IMR-90 (cell line): ENCODE measurements at regions of chr4 and their contacts with region 1.

Region 1: DNA sequence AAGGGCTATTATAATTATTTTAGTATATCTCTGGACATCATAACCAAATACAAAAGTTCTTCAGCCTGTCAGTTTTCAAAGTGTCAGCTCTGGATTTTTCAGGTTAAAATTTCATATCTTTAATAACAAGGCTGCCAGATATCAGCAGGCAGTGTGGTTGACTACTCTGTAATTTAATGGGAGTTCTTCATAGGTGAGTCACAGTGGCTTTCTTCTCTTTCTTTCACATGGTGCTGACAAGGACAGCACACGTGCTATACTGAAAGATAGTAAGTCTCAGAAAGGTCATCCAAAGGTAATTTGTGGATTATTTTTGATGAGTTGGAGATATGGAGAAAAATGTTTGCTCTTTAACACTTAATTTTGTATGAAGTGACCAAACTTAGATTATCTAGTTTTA is 43.2 kb downstream of the GALNT7 start:
- DNase-seq: peak; percentile 78
- ATAC-seq: peak; percentile 88
- H3K4me3 ChIP-seq: no peak overlapping the region
- H3K27ac ChIP-seq: no peak overlapping the region
- H3K4me1 ChIP-seq: no peaks in the 10 kb centered on the region
- H3K27me3 ChIP-seq: no peaks in the 10 kb centered on the region
- CTCF ChIP-seq: no peak
- POLR2A ChIP-seq: no peak
- RAD21 ChIP-seq: no peak

Region 2: DNA sequence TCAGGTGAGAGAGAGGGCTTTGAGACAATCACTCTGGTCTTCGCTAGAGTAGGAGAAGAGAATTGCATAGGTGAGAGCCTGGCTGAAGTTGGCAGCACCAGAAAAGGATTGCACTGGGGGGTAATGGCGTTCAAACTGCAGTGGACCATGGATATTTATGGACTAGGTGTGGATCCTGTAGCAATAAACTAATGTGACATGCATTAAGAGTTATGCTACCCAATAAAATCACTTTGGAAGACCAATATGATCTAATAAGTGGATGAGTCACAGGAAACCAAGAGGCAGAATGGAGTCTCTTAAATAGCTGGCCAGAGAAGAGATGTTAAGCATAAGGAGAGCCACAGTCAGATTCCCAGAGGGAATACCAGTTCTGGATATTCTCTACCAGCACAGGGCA is 811.8 kb after region 1 on chr4:
- CTCF ChIA-PET with region 1: no interaction called
- POLR2A ChIA-PET with region 1: no interaction called
- dilution Hi-C with region 1: no loop called
- in situ Hi-C with region 1: no loop called
- intact Hi-C with region 1: loop called (anchors 5 kb)
- DNase-seq: peak; percentile 2
- ATAC-seq: no peak
- H3K4me3 ChIP-seq: no peak overlapping the region
- H3K27ac ChIP-seq: no peak overlapping the region
- H3K4me1 ChIP-seq: no peaks in the 10 kb centered on the region
- H3K27me3 ChIP-seq: no peaks in the 10 kb centered on the region
- CTCF ChIP-seq: no peak
- POLR2A ChIP-seq: no peak
- RAD21 ChIP-seq: no peak